ENCODE measurements at regions of chr18 and their contacts with region 1.

Region 1: GRCh38 chr18:29321561-29321960 is 1144.6 kb upstream of the CDH2 start:
- DNase-seq: no peak
- H3K4me3 Mint-ChIP-seq: no peak overlapping the region
- H3K27ac Mint-ChIP-seq: no peak overlapping the region
- H3K4me1 Mint-ChIP-seq: no peaks in the 10 kb centered on the region
- H3K27me3 Mint-ChIP-seq: no peaks in the 10 kb centered on the region
- CTCF ChIP-seq: no peak

Region 2: GRCh38 chr18:29309366-29309765 is 12.2 kb before region 1 on chr18:
- CTCF ChIA-PET with region 1: no interaction called
- intact Hi-C with region 1: no loop called
- DNase-seq: no peak
- H3K4me3 Mint-ChIP-seq: no peak overlapping the region
- H3K27ac Mint-ChIP-seq: no peak overlapping the region
- H3K4me1 Mint-ChIP-seq: no peaks in the 10 kb centered on the region
- H3K27me3 Mint-ChIP-seq: no peaks in the 10 kb centered on the region
- CTCF ChIP-seq: no peak

Region 3: GRCh38 chr18:29594493-29594892 is 272.9 kb after region 1 on chr18:
- CTCF ChIA-PET with region 1: interaction called, 10 read pairs
- intact Hi-C with region 1: no loop called
- DNase-seq: no peak
- H3K4me3 Mint-ChIP-seq: no peak overlapping the region
- H3K27ac Mint-ChIP-seq: no peak overlapping the region
- H3K4me1 Mint-ChIP-seq: no peaks in the 10 kb centered on the region
- H3K27me3 Mint-ChIP-seq: no peaks in the 10 kb centered on the region
- CTCF ChIP-seq: no peak

Measured in Calu3 (cell line).